ENCODE measurements at regions of chr12 and their contacts with region 1.

Region 1: GRCh38 chr12:74871800-74872438 is 334.3 kb downstream of the ATXN7L3B start:
- DNase-seq: no peak
- ATAC-seq: no peak
- H3K4me3 ChIP-seq: no peak overlapping the region
- H3K27ac ChIP-seq: no peak overlapping the region
- H3K4me1 ChIP-seq: no peaks in the 10 kb centered on the region
- H3K27me3 ChIP-seq: no peaks in the 10 kb centered on the region
- CTCF ChIP-seq: no peak
- EP300 ChIP-seq: no peak
- POLR2A ChIP-seq: no peak
- RAD21 ChIP-seq: no peak

Region 2: GRCh38 chr12:74922117-74922516 is 50.2 kb after region 1 on chr12:
- CTCF ChIA-PET with region 1: no interaction called
- POLR2A ChIA-PET with region 1: no interaction called
- in situ Hi-C with region 1: no loop called
- intact Hi-C with region 1: loop called (anchors 2 kb)
- DNase-seq: no peak
- ATAC-seq: no peak
- H3K4me3 ChIP-seq: no peak overlapping the region
- H3K27ac ChIP-seq: no peak overlapping the region
- H3K4me1 ChIP-seq: no peaks in the 10 kb centered on the region
- H3K27me3 ChIP-seq: no peaks in the 10 kb centered on the region; a peak in 1 of 5 replicates
- CTCF ChIP-seq: no peak
- EP300 ChIP-seq: no peak
- POLR2A ChIP-seq: no peak
- RAD21 ChIP-seq: no peak